ENCODE measurements at regions of chr2 and their contacts with region 1.

Region 1: DNA sequence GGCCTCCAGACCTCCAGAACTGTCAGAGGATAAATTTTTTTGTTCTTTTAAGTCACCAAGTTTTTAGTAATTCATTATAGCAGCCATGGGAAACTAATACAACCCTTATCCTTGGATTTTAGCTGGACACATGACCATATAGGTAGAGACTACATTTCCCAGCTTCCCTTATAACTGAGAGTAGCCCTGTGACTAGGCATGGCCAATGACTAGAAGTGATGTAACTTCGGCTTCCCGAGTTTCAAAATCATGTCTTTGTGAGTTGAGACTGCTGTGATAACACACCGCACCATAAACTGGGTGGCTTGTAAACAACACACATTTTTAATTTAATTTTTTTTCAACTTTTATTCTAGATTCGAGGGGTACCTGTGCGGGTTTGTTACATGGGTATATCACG is 134.0 kb upstream of the SERTAD2 start:
- DNase-seq: no peak
- H3K4me3 Mint-ChIP-seq: no peak overlapping the region
- H3K27ac Mint-ChIP-seq: no peak overlapping the region
- H3K4me1 Mint-ChIP-seq: no peaks in the 10 kb centered on the region
- H3K27me3 Mint-ChIP-seq: peaks cover 15% of the 10 kb centered on the region

Region 2: GRCh38 chr2:64534363-64534762 is 253.3 kb before region 1 on chr2:
- intact Hi-C with region 1: no loop called
- DNase-seq: no peak
- H3K4me3 Mint-ChIP-seq: peak overlapping the region; percentile 8
- H3K27ac Mint-ChIP-seq: peak overlapping the region; percentile 57
- H3K4me1 Mint-ChIP-seq: peaks cover 56% of the 10 kb centered on the region
- H3K27me3 Mint-ChIP-seq: no peaks in the 10 kb centered on the region

Region 3: GRCh38 chr2:64720535-64721327 is 67.0 kb before region 1 on chr2:
- intact Hi-C with region 1: no loop called
- DNase-seq: no peak
- H3K4me3 Mint-ChIP-seq: no peak overlapping the region
- H3K27ac Mint-ChIP-seq: no peak overlapping the region
- H3K4me1 Mint-ChIP-seq: peaks cover 15% of the 10 kb centered on the region
- H3K27me3 Mint-ChIP-seq: no peaks in the 10 kb centered on the region

Region 4: DNA sequence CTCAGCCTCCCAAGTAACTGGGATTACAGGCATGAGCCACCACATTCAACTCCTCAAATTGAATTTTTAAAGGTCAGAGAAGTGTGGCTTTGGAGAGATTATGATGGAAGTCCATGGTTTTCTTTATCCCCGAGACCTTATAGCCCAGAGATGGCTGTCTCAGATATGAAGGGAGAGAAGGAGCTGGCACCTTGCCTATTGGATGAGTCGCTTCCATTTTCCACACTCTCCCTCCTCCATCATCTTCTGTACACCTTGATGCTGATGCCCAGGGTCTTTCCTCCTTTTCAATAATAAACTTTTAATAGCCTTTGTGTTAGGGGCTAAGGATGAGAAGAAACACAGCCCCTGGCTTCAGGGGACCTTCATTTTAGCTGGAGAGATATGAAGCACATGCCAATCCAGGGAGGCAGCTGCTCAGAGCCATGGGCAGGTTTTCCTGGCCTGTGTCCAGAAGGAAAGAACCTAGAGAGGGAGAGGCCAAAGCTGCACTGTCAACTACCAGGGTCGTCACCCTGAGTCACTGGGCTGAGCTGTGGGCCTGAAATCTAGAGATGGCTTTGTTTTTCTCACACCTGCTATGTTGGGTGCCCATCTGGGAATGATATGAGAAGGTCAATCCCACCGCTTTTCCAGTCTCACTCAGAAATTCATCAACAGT is 12.0 kb after region 1 on chr2:
- intact Hi-C with region 1: loop called (anchors 2 kb)
- DNase-seq: no peak
- H3K4me3 Mint-ChIP-seq: no peak overlapping the region
- H3K27ac Mint-ChIP-seq: no peak overlapping the region
- H3K4me1 Mint-ChIP-seq: peaks cover 3% of the 10 kb centered on the region
- H3K27me3 Mint-ChIP-seq: peaks cover 4% of the 10 kb centered on the region